ENCODE measurements at regions of chr16 and their contacts with region 1.

Region 1: DNA sequence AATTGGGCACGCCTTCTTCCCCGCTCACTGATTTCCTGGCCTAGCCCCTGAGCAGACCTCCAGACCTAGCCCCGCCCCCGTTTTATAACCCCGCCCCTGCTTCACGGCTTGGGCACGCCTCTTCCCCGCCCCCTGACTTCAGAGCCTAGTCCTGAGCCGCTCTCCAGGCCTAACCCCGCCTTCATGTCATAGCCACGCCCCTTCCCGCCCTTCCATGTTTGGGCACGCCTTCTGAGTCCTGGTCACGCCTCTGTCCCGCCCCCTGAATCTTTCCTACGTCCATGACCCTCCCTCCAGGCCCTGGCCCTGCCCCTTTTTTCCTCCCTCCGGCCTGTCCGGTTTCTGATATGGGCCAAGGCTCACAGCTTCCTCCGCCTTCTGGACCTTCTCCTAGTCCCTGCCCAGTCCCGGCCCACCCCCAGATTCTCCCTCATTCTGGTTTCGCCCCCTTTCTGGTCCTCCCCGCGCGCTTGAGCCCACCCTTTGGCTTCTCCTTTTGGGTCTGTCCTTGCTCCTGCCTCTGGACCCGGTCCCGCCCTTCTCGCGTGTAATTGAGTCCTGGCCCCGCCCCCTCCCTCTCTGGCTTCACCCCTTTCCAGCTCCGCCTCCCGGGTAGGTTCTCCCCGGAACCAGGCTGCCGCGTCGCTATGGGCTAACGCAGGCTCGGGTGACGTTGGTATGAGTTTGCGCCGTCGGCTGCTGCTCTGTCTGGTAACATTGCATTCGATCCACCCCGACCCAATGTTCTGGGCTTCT is 15.1 kb upstream of the EEF2K start:
- DNase-seq: peak; percentile 91 to 100 (median 99)
- ATAC-seq: peak; percentile 78
- H3K4me3 ChIP-seq: peak overlapping the region; percentile 92
- H3K4me3 Mint-ChIP-seq: peak overlapping the region; percentile 78 to 99 (median 95)
- H3K27ac ChIP-seq: peak overlapping the region; percentile 99
- H3K27ac Mint-ChIP-seq: peak overlapping the region; percentile 98 to 100 (median 100)
- H3K4me1 ChIP-seq: peaks cover 47 to 59% of the 10 kb centered on the region in 2 donors
- H3K4me1 Mint-ChIP-seq: peaks cover 41 to 74% (median 62%) of the 10 kb centered on the region in 7 donors
- H3K27me3 ChIP-seq: no peaks in the 10 kb centered on the region
- H3K27me3 Mint-ChIP-seq: peaks cover 0 to 5% (median 0%) of the 10 kb centered on the region in 5 donors

Region 2: DNA sequence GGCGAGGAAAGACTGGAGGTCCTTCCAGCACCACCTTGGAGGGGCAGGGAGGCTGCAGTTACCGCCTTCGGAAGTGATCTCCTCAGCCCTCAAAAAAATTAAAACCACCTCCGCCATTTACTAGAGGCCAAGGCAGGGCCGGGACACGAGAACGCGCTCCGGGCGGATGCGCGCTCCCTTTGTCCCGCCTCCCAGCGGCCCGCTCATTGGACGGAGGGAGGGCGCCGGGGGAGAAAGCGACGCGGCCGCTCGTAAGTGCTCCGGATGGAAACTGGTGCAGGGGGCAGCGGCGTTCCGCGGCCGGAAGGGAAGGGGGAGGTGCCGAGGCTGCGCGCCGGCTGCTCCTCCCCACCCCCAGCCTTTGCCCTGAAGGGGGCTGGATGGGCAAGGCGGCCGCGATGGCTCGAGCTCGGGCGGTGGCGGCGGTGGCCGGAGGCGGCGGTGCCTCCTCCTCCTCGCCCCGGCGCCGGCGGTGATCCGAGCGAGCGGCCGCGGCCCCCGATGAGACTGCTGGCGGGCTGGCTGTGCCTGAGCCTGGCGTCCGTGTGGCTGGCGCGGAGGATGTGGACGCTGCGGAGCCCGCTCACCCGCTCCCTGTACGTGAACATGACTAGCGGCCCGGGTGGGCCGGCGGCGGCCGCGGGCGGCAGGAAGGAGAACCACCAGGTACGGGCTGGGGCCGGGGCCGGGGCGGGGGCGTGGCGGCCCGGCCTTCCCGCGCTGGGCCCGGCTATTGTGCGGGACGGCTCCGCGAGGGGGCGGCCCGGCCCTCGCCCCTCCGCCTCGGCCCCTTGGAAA is 591.5 kb before region 1 on chr16 and contains the start of gene METTL9:
- CTCF ChIA-PET with region 1: no interaction called
- POLR2A ChIA-PET with region 1: interaction called, 3 read pairs
- intact Hi-C with region 1: loop called (anchors 1 kb)
- DNase-seq: peak; percentile 92 to 96 (median 94)
- ATAC-seq: peak; percentile 96
- H3K4me3 ChIP-seq: peak within 1 kb of the TSS; percentile 82
- H3K4me3 Mint-ChIP-seq: peak within 1 kb of the TSS; percentile 91 to 98 (median 94)
- H3K27ac ChIP-seq: peak within 1 kb of the TSS; percentile 91
- H3K27ac Mint-ChIP-seq: peak within 1 kb of the TSS; percentile 86 to 99 (median 96)
- H3K4me1 ChIP-seq: peaks cover 21 to 32% of the 10 kb centered on the region in 2 donors
- H3K4me1 Mint-ChIP-seq: peaks cover 45 to 70% (median 54%) of the 10 kb centered on the region in 7 donors
- H3K27me3 ChIP-seq: no peaks in the 10 kb centered on the region
- H3K27me3 Mint-ChIP-seq: no peaks in the 10 kb centered on the region
- total RNA-seq, gene METTL9: 68.4 to 128 (median 80.1) TPM

Region 3: GRCh38 chr16:21952793-21953540 is 238.0 kb before region 1 on chr16 and contains the start of gene UQCRC2:
- CTCF ChIA-PET with region 1: interaction called, 8 read pairs
- POLR2A ChIA-PET with region 1: interaction called, 45 read pairs
- intact Hi-C with region 1: loop called (anchors 1 kb)
- DNase-seq: peak; percentile 76 to 92 (median 89)
- ATAC-seq: peak; percentile 94
- H3K4me3 ChIP-seq: peak within 1 kb of the TSS; percentile 81
- H3K4me3 Mint-ChIP-seq: peak within 1 kb of the TSS; percentile 94 to 100 (median 99)
- H3K27ac ChIP-seq: peak within 1 kb of the TSS; percentile 97
- H3K27ac Mint-ChIP-seq: peak within 1 kb of the TSS; percentile 96 to 99 (median 98)
- H3K4me1 ChIP-seq: peaks cover 30 to 33% of the 10 kb centered on the region in 2 donors
- H3K4me1 Mint-ChIP-seq: peaks cover 34 to 86% (median 68%) of the 10 kb centered on the region in 7 donors
- H3K27me3 ChIP-seq: no peaks in the 10 kb centered on the region
- H3K27me3 Mint-ChIP-seq: no peaks in the 10 kb centered on the region
- total RNA-seq, gene UQCRC2: 158 to 227 (median 180) TPM

Region 4: DNA sequence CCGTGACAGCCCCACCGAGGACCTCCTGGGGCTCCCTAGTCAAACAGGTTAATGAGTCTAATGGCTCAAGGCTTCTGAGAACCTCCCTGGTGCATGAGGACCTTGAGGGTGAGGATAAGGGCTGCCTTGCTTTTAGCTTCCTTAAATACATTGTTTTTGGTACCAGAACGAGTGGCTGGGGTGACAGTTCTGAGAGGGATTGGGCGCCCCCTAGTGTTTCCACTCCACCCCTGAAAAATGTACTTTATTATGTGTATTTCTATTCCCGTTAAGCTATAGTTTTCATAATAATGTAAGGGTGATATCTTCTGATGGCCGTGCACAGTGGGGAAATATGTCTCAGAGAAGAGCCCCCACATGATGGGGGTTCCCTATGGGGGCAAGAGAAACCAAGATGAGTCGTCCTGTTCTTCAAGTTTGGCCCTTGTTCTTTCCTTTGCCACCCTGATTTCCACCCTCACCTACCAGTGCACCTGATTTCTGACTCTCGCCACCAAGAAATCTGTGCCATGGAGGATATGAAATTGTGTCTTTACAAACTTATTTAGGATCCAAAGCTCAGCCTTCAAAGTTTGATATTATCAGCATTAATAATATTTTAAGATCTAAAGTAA is 113.1 kb before region 1 on chr16:
- CTCF ChIA-PET with region 1: interaction called, 22 read pairs
- POLR2A ChIA-PET with region 1: interaction called, 13 read pairs
- intact Hi-C with region 1: loop called (anchors 1 kb)
- DNase-seq: peak; percentile 43 to 73 (median 69)
- ATAC-seq: peak; percentile 87
- H3K4me3 ChIP-seq: no peak overlapping the region
- H3K4me3 Mint-ChIP-seq: no peak overlapping the region
- H3K27ac ChIP-seq: no peak overlapping the region
- H3K27ac Mint-ChIP-seq: peak overlapping the region in 1 of 9 donors; percentile 41
- H3K4me1 ChIP-seq: no peaks in the 10 kb centered on the region
- H3K4me1 Mint-ChIP-seq: peaks cover 0 to 5% (median 2%) of the 10 kb centered on the region in 7 donors
- H3K27me3 ChIP-seq: no peaks in the 10 kb centered on the region
- H3K27me3 Mint-ChIP-seq: no peaks in the 10 kb centered on the region

Region 5: DNA sequence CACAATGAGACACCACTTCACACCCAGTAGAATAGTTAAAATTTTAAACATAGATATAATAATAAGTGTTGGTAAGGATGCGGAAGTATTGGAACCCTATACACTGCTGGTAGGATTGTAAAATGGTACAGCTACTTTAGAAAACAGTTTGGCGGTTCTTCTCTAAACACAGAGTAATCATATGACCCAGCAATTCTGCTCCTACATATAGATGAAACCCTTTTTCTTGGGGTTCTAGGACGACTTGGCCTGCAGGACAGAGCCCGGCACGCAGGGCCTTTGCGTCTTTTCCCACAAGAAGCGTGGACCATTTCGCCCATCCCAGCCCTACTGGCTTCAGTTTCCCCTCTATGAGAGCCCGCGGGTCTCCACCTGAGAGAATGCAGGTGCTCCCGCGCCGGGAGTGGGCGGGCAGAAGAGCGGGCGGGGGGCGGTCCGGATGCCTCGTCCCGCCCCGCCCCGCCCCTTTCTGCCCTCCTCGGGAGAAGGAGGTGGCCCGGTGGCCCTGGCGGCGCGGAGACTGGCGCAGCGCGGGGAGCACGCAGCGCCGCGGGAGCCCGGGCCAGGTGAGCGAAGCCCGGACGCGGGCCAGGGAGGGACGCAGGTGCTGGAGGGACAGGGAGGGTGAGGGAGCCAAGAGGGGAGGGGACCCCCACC is 28.8 kb before region 1 on chr16 and contains the start of gene SDR42E2:
- CTCF ChIA-PET with region 1: interaction called, 3 read pairs
- POLR2A ChIA-PET with region 1: interaction called, 3 read pairs
- intact Hi-C with region 1: loop called in 1 of 2 experiments (anchors 2 kb)
- DNase-seq: peak in 8 of 9 donors; percentile 21 to 54 (median 44)
- ATAC-seq: peak; percentile 81
- H3K4me3 ChIP-seq: peak within 1 kb of the TSS; percentile 41
- H3K4me3 Mint-ChIP-seq: peak within 1 kb of the TSS; percentile 20 to 76 (median 64)
- H3K27ac ChIP-seq: no peak within 1 kb of the TSS
- H3K27ac Mint-ChIP-seq: peak within 1 kb of the TSS in 1 of 9 donors; percentile 3
- H3K4me1 ChIP-seq: peaks cover 0 to 4% of the 10 kb centered on the region in 2 donors
- H3K4me1 Mint-ChIP-seq: peaks cover 0 to 12% (median 11%) of the 10 kb centered on the region in 7 donors
- H3K27me3 ChIP-seq: no peaks in the 10 kb centered on the region
- H3K27me3 Mint-ChIP-seq: peaks cover 11 to 36% (median 13%) of the 10 kb centered on the region in 5 donors
- total RNA-seq, gene SDR42E2: 0.67 to 1.6 (median 1.0) TPM in 4 of 5 experiments, not detected in the other

Region 6: GRCh38 chr16:22262460-22262859 is 71.5 kb after region 1 on chr16:
- CTCF ChIA-PET with region 1: no interaction called
- POLR2A ChIA-PET with region 1: no interaction called
- intact Hi-C with region 1: no loop called
- DNase-seq: no peak
- ATAC-seq: no peak
- H3K4me3 ChIP-seq: no peak overlapping the region
- H3K4me3 Mint-ChIP-seq: no peak overlapping the region
- H3K27ac ChIP-seq: no peak overlapping the region
- H3K27ac Mint-ChIP-seq: peak overlapping the region in 3 of 9 donors; percentile 32 to 47 (median 46)
- H3K4me1 ChIP-seq: peaks cover 0 to 7% of the 10 kb centered on the region in 2 donors
- H3K4me1 Mint-ChIP-seq: peaks cover 10 to 36% (median 17%) of the 10 kb centered on the region in 7 donors
- H3K27me3 ChIP-seq: no peaks in the 10 kb centered on the region
- H3K27me3 Mint-ChIP-seq: no peaks in the 10 kb centered on the region

Region 7: DNA sequence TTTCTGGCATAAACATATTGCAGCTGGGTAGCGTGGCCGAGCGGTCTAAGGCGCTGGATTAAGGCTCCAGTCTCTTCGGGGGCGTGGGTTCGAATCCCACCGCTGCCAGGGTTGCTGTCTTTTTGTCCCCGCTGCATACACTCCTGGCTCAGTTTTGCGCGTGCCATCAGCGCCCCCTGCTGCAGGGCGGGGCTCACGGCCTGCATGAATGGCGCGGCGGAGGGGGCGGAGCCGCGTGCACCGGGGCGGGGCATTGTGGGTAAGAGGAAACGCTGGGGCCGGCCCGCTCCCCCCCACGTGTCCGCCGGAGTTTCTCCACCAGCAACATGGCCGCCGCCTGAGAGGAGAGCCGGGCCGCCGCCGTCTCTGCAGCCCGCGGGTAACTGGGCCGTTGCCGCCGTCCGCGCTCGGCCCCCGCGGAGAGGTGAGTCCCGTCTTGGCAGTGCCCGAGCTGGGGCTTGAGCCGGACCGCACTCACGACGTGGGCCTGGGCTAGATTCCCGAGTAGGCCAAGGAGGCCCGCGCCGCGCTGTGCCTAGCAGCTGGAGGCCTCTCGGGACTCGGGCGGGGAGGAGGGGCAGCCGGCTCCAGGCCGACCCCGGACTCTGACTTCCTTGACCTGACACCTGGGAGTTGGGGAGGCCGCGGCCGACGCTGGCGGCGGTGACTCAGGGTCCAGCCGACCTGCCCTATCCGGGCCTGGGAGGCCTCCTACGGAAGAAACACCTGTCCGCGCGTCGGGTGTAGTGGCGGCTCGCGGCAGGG is 106.3 kb after region 1 on chr16 and contains the start of gene POLR3E:
- CTCF ChIA-PET with region 1: interaction called, 21 read pairs
- POLR2A ChIA-PET with region 1: interaction called, 167 read pairs
- intact Hi-C with region 1: loop called (anchors 1 kb)
- DNase-seq: peak; percentile 98 to 100 (median 100)
- ATAC-seq: peak; percentile 94
- H3K4me3 ChIP-seq: peak within 1 kb of the TSS; percentile 66
- H3K4me3 Mint-ChIP-seq: peak within 1 kb of the TSS; percentile 90 to 98 (median 95)
- H3K27ac ChIP-seq: peak within 1 kb of the TSS; percentile 99
- H3K27ac Mint-ChIP-seq: peak within 1 kb of the TSS; percentile 95 to 100 (median 99)
- H3K4me1 ChIP-seq: peaks cover 14 to 18% of the 10 kb centered on the region in 2 donors
- H3K4me1 Mint-ChIP-seq: peaks cover 27 to 49% (median 48%) of the 10 kb centered on the region in 7 donors
- H3K27me3 ChIP-seq: no peaks in the 10 kb centered on the region
- H3K27me3 Mint-ChIP-seq: peaks cover 0 to 8% (median 0%) of the 10 kb centered on the region in 5 donors
- total RNA-seq, gene POLR3E: 60.1 to 232 (median 112) TPM

Region 8: DNA sequence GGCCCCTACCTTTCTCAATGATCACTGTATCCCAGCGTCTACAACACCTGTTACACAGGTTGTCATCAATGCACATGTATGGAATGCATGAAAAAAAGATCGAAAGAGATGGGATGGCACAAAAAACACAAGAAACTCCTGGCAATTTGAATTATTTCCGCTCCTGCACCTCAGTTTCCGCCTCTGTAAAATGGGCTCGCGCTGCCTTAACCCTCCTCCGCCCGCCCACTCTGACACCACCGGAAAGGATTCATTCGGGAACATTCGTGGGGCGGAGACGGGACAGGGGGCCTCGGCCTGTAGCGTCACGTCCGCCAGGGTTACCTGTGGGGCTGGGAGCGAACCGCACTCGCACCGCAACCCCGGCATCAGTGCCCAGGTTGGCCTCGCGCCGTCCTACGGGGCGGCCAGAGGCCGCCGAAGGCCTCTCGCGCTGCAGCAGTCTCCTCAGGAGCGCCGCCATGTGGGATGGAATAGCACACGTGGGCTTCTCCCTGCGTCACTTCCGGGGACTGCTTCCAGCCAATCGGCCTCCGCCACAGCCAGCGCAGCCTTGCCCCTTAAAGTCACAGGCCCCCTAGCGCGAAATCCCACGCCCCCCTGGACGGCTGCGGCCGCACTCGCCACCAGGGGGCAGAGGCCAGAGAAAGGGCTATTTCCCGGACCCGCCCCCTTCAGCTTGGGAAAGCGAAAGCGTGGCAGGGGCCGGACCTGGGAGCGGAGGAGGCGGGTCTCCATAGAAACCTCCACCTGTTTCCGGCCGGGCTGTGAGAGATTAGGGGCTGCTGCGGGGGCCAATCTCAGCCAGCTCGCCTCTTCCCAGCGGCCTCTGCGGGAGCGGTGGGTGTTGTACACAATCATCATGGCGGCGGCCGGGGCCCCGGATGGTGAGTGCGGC is 1366.2 kb after region 1 on chr16 and contains the starts of genes EARS2 and UBFD1:
- CTCF ChIA-PET with region 1: no interaction called
- POLR2A ChIA-PET with region 1: no interaction called
- intact Hi-C with region 1: loop called in 1 of 2 experiments (anchors 5 kb)
- DNase-seq: peak; percentile 91 to 99 (median 95)
- ATAC-seq: peak; percentile 92
- H3K4me3 ChIP-seq: peak within 1 kb of the TSS; percentile 98
- H3K4me3 Mint-ChIP-seq: peak within 1 kb of the TSS; percentile 92 to 97 (median 93)
- H3K27ac ChIP-seq: peak within 1 kb of the TSS; percentile 85
- H3K27ac Mint-ChIP-seq: peak within 1 kb of the TSS; percentile 85 to 96 (median 94)
- H3K4me1 ChIP-seq: peaks cover 15 to 17% of the 10 kb centered on the region in 2 donors
- H3K4me1 Mint-ChIP-seq: peaks cover 14 to 45% (median 36%) of the 10 kb centered on the region in 7 donors
- H3K27me3 ChIP-seq: no peaks in the 10 kb centered on the region
- H3K27me3 Mint-ChIP-seq: no peaks in the 10 kb centered on the region
- total RNA-seq, gene EARS2: 10.6 to 19.2 (median 15.1) TPM
- total RNA-seq, gene UBFD1: 43.4 to 54.4 (median 51.0) TPM